A673 (cell line): ENCODE measurements at regions of chr11 and their contacts with region 1.

Region 1: GRCh38 chr11:86802601-86803051 is 2.3 kb downstream of the PRSS23 start:
- DNase-seq: peak; percentile 82
- H3K4me3 ChIP-seq: no peak overlapping the region
- H3K27ac ChIP-seq: no peak overlapping the region
- H3K4me1 ChIP-seq: peaks cover 26% of the 10 kb centered on the region
- H3K27me3 ChIP-seq: no peaks in the 10 kb centered on the region
- CTCF ChIP-seq: peak; percentile 74

Region 2: DNA sequence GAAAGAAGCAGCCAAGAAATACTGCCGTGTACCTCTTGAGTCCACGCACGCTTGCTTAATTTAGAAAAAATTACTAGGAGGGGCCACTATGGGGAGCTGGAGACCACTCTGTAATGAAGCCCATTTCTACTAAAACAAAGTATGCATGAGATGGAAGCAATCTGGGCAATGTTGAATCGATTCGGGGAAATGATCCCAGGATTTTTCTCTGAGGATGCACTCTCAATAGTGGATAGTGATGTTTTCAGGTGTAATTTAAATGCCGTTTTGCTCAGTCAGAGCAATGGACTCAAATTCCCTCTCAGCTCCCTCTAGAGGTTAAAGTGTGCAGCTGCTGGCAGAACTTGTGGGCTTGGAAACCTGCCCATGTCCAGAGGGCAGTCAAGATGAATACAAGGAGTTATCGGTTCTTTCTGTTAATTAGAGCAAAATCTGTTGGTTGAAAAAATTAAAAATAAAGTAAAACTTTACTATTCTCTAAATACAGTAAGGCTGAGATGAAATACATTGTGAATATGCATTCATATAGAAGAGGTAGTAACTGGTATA is 194.3 kb before region 1 on chr11:
- CTCF ChIA-PET with region 1: interaction called, 5 read pairs
- POLR2A ChIA-PET with region 1: no interaction called
- intact Hi-C with region 1: loop called (anchors 1 kb)
- DNase-seq: peak; percentile 82
- H3K4me3 ChIP-seq: no peak overlapping the region
- H3K27ac ChIP-seq: no peak overlapping the region
- H3K4me1 ChIP-seq: peaks cover 5% of the 10 kb centered on the region
- H3K27me3 ChIP-seq: no peaks in the 10 kb centered on the region
- CTCF ChIP-seq: peak; percentile 100

Region 3: GRCh38 chr11:86632499-86633269 is 169.9 kb before region 1 on chr11:
- CTCF ChIA-PET with region 1: interaction called, 3 read pairs
- POLR2A ChIA-PET with region 1: no interaction called
- intact Hi-C with region 1: loop called (anchors 5 kb)
- DNase-seq: peak; percentile 83
- H3K4me3 ChIP-seq: no peak overlapping the region
- H3K27ac ChIP-seq: no peak overlapping the region
- H3K4me1 ChIP-seq: peaks cover 3% of the 10 kb centered on the region
- H3K27me3 ChIP-seq: no peaks in the 10 kb centered on the region
- CTCF ChIP-seq: peak; percentile 59

Region 4: DNA sequence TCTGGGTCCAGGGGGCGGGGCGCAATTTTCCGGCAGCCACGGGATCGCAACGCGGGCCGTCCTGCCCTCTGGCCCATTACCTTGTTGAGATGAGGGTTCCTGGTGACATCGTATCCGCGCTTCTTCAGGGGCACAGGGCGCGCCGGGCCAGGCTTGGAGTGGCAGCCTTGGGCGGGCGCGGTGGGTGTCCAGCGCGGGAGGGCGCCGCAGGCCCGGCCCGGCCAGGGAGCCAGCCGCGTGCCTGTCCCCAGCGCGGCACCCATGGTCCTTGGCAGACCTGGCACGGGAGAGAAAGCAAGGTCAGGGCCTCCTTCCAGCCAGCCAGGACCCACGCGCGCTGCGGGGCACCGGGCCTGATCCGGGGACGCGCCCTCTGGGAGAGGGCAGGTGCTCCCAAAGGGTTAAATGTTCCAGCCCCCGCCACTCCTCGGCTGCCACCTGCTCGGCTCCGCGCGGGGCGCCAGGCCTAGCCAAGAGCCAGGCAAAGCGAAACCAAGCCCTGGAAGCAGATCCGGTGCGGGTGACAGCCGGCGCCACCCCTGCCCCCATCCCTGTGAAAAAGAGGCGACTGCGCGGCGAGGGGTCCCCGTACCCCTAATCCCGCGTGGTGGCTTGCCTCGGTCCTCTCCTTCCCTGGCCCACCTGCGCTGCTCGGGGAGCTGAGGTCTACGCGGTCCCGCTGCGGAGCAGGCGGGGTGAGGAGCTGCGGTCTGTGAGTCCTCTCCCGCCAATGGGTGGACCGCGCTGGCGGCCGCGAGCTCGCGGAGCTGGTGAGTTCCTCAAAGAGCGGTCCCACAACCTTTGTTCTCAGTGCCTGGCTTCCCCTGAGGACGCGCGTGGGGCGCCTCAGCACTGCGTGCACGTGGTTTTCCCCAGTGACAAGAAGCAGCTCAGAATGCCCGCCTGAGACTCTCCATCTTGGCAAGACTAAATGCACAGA is 130.7 kb before region 1 on chr11 and contains the start of gene ME3:
- CTCF ChIA-PET with region 1: no interaction called
- POLR2A ChIA-PET with region 1: no interaction called
- intact Hi-C with region 1: loop called (anchors 5 kb)
- DNase-seq: peak; percentile 66
- H3K4me3 ChIP-seq: peak within 1 kb of the TSS; percentile 55
- H3K27ac ChIP-seq: peak within 1 kb of the TSS; percentile 53
- H3K4me1 ChIP-seq: peaks cover 23% of the 10 kb centered on the region
- H3K27me3 ChIP-seq: no peaks in the 10 kb centered on the region
- CTCF ChIP-seq: no peak
- total RNA-seq, gene ME3: 6.9 and 7.6 TPM in 2 replicates

Region 5: DNA sequence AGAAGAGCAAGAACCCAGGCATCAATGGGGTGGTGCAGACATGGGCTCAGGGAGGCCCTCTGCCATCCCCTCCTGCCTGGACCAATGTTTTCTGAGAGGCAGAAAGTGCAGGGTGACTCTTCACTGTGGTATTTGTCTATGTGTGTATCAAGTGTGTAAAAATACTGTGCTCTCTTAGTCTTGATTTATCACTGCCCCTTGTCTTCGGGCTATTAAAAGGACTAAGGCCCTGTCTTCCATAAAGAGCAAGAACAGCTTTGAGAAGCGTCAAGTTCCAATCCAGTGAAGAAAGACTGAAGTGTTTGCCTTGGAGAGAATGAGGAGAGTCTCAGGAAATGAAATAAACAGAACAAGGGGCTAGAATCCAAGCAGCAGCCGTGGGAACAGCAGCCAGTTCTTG is 12.1 kb after region 1 on chr11:
- CTCF ChIA-PET with region 1: no interaction called
- POLR2A ChIA-PET with region 1: no interaction called
- intact Hi-C with region 1: no loop called
- DNase-seq: no peak
- H3K4me3 ChIP-seq: no peak overlapping the region
- H3K27ac ChIP-seq: no peak overlapping the region
- H3K4me1 ChIP-seq: peaks cover 26% of the 10 kb centered on the region
- H3K27me3 ChIP-seq: no peaks in the 10 kb centered on the region
- CTCF ChIP-seq: no peak